Right cardiac atrium (tissue), 5 donors: ENCODE measurements at regions of chr5 and their contacts with region 1.

Region 1: DNA sequence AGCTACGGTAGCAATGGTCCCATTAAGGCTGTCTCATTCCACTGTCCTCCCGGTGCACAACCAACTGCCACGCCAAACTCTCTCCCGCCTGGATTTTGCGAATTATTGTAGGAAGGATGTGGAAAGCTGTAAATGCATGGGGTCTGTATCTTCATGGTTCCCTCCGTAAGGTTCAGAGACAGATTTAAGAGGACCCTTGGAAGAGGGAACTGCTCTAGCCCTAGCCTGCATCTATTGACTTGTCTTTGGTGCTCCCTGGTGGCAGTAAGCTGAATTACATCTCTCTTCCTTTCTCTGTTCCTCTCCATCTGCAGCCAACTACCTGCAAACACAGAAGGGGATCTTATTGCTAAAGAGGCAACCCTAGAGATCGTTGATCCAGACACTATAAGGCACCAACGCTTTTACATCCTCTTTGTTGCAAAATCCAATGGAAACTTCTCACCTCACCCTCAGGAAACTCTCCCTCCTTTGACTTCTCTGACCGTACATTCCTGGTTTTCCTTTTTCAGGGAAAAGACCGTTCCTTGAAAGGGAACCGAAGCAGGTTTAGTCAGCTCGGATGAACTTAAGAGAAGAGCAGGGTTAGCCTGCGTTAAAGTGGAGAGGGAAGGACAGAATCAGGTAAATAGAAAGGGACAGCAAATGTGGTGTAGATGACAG is 11.9 kb downstream of the CAPSL start:
- DNase-seq: no peak
- ATAC-seq: peak; percentile 65 to 79
- H3K4me3 ChIP-seq: no peak overlapping the region
- H3K27ac ChIP-seq: no peak overlapping the region
- H3K4me1 ChIP-seq: no peaks in the 10 kb centered on the region
- H3K27me3 ChIP-seq: no peaks in the 10 kb centered on the region

Region 2: GRCh38 chr5:34941936-34942335 is 984.6 kb before region 1 on chr5:
- intact Hi-C with region 1: no loop called
- DNase-seq: no peak
- ATAC-seq: no peak
- H3K4me3 ChIP-seq: no peak overlapping the region
- H3K27ac ChIP-seq: no peak overlapping the region
- H3K4me1 ChIP-seq: no peaks in the 10 kb centered on the region
- H3K27me3 ChIP-seq: no peaks in the 10 kb centered on the region

Region 3: DNA sequence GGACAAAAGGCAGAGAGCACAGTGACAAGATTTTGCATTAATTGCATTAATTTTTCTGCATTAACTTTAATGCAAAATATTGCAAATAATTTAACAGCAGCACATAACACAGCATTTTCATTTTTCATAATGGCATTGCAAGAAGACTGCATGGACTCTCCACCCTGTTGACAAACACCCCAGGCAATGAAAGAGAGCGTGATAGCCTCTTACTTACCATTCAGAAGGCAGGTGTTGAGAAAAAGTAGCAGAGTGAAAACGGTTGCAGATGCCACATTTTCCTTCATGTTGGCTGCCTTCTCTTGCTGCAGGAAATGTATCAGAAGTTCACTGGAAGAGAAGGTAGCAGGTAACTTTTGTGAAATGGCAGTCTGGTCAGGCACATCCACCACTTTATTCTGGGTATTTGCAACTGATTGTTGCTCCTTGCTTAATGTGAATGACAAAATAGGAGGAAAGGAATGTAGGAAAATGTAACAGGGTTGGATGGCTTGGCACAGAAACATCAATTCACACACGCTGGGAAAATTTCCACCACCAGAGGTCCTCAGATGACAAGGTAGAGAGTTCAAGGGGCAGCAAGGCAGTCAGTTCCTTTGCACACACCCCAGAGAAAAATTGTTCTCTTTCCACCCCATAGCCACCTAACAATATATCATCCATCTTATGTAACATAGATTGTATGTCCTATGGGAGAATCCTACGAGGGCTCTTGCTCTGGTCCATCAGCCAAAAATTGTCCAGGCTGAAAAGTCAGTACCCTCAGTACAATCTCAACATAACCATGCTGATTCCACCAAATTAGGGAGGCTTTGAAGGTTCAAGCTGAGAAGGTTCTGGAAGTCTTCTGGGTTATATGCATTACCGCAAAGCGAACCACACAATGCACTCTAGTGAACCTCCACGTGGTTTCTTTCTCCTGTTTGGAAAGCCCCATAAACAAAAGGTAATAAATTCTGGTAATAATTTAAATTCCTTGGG is 836.9 kb before region 1 on chr5:
- intact Hi-C with region 1: loop called in 2 of 4 experiments (anchors 5 to 10 kb)
- DNase-seq: peak in 2 of 3 donors; percentile 13 to 43
- ATAC-seq: peak; percentile 57 to 65
- H3K4me3 ChIP-seq: no peak overlapping the region
- H3K27ac ChIP-seq: no peak overlapping the region
- H3K4me1 ChIP-seq: no peaks in the 10 kb centered on the region
- H3K27me3 ChIP-seq: no peaks in the 10 kb centered on the region

Region 4: GRCh38 chr5:35617435-35618303 is 308.9 kb before region 1 on chr5 and contains the start of gene SPEF2:
- intact Hi-C with region 1: loop called in 3 of 4 experiments (anchors 2 to 5 kb)
- DNase-seq: peak; percentile 87 to 93 (median 92)
- ATAC-seq: peak; percentile 99 to 100
- H3K4me3 ChIP-seq: peak within 1 kb of the TSS; percentile 63
- H3K27ac ChIP-seq: no peak within 1 kb of the TSS
- H3K4me1 ChIP-seq: no peaks in the 10 kb centered on the region
- H3K27me3 ChIP-seq: no peaks in the 10 kb centered on the region
- total RNA-seq, gene SPEF2: 1.6 to 4.5 (median 2.9) TPM

Region 5: DNA sequence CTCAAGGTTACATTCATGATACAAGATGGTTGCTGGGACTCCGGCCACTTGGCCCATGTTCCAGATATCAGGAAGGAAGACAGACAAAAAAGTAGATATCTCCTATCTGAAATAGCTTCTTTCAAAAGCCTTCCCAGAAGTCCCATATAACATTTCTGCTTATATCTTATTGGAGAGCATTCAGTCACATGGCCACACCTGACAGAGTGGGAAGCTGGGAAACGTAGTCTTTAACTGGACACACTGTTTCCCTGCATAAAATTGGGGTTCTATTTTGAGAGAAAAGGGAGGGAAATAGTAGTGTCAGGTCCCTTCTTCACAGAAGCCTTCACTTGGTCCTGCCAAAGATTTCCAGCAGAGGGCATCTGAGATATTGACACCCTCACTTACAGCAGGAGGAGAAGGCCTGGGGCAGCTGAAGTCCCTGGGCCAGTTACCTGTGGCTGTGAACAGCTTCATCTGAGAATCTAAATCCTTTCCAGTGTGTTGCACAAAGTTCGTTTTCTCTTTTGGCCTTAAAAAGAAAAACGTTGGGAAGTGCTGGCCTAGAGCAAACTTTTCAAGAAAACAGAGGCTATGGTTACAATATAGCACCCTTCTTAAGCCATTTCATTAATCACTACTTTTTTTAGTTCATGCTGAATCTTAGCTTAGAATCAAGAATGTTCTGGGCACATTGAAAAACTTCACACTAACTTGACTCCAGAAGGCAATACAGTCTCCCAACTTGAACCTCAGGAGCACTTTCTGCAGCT is 275.3 kb before region 1 on chr5:
- intact Hi-C with region 1: loop called in 1 of 4 experiments (anchors 10 kb)
- DNase-seq: no peak
- ATAC-seq: no peak
- H3K4me3 ChIP-seq: no peak overlapping the region
- H3K27ac ChIP-seq: no peak overlapping the region
- H3K4me1 ChIP-seq: no peaks in the 10 kb centered on the region
- H3K27me3 ChIP-seq: no peaks in the 10 kb centered on the region

Region 6: GRCh38 chr5:35777358-35778087 is 149.0 kb before region 1 on chr5:
- intact Hi-C with region 1: loop called (anchors 2 to 10 kb)
- DNase-seq: peak in 2 of 3 donors; percentile 51 to 78
- ATAC-seq: peak; percentile 40
- H3K4me3 ChIP-seq: no peak overlapping the region
- H3K27ac ChIP-seq: no peak overlapping the region
- H3K4me1 ChIP-seq: no peaks in the 10 kb centered on the region
- H3K27me3 ChIP-seq: no peaks in the 10 kb centered on the region

Region 7: GRCh38 chr5:36029914-36030313 is 103.4 kb after region 1 on chr5:
- intact Hi-C with region 1: no loop called
- DNase-seq: no peak
- ATAC-seq: no peak
- H3K4me3 ChIP-seq: no peak overlapping the region
- H3K27ac ChIP-seq: no peak overlapping the region
- H3K4me1 ChIP-seq: no peaks in the 10 kb centered on the region
- H3K27me3 ChIP-seq: no peaks in the 10 kb centered on the region